ENCODE measurements at regions of chr3 and their contacts with region 1.

Region 1: GRCh38 chr3:100463002-100463401 is 29.4 kb upstream of the TMEM45A start:
- DNase-seq: no peak
- H3K4me3 ChIP-seq: no peak overlapping the region
- H3K27ac ChIP-seq: no peak overlapping the region
- H3K4me1 ChIP-seq: no peaks in the 10 kb centered on the region
- H3K27me3 ChIP-seq: no peaks in the 10 kb centered on the region
- CTCF ChIP-seq: peak; percentile 75

Region 2: DNA sequence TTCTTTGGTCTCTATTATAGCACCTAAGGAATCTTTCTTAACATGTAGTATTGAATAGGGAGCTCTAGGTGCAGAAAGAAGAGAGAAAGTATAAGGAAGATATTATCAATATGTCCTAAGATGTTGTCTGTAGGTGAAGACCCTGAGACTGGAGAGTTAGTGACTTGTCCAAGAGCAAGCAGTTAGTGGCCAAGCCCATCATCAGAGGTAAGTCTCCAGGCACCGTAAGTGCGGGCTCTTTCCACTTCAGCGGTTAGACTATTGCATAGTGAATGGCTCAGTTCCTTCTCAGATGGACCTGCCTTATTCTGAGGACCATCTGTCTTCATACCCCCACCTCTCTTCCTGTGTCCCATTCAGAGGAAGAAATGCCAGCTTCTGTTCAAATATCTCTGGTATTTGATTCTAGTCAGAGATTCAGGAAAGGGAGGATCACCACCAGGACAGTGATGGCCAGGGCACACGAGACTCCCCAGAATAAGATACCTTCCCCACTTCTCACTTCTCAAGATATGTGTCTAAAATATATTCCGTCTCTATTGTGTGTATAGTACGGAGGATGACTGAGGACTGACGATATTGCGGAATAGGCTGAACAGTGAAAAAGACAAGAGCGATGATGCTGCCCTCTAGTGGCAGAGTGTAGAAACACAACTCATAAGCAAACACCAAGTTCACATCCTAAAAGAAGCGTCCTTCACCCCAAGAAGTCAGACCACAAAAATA is 127.3 kb after region 1 on chr3:
- intact Hi-C with region 1: loop called (anchors 5 kb)
- DNase-seq: no peak
- H3K4me3 ChIP-seq: no peak overlapping the region
- H3K27ac ChIP-seq: no peak overlapping the region
- H3K4me1 ChIP-seq: no peaks in the 10 kb centered on the region
- H3K27me3 ChIP-seq: no peaks in the 10 kb centered on the region
- CTCF ChIP-seq: peak; percentile 89